CD8-positive, alpha-beta T cell (primary cell): ENCODE measurements at regions of chr13 and their contacts with region 1.

Region 1: DNA sequence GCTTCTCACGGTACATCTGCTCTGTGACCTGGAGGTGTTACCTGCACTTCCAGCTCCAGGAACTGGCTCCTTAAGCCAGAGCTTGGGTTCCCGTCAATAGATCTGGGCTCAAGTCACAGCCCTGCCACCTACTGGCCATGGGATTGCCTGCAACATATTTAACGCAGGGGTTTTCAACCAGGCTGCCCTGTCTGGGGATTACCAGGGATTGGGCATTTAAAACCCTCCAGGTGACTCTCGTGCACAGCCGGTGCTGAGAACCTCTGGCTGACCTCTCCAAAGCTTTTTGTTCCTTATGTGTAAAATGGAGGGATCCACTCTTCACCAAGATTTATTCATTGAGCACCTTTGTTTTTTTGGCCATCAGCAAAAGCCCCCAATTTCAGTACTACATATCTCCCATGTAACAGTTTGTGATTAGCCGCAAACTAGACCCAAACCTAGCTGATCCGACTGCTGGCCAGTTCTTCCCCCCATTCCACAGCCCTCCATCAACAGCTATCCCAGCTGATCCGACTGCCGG is 76.6 kb upstream of the STK24 start:
- DNase-seq: peak; percentile 52 to 80 (median 72)
- ATAC-seq: peak; percentile 97
- H3K4me3 ChIP-seq: no peak overlapping the region
- H3K4me3 Mint-ChIP-seq: peak overlapping the region; percentile 78
- H3K27ac ChIP-seq: no peak overlapping the region
- H3K27ac Mint-ChIP-seq: no peak overlapping the region
- H3K4me1 ChIP-seq: peaks cover 3% of the 10 kb centered on the region
- H3K4me1 Mint-ChIP-seq: peaks cover 2% of the 10 kb centered on the region
- H3K27me3 ChIP-seq: no peaks in the 10 kb centered on the region
- H3K27me3 Mint-ChIP-seq: peaks cover 5% of the 10 kb centered on the region
- CTCF ChIP-seq: peak; percentile 78

Region 2: DNA sequence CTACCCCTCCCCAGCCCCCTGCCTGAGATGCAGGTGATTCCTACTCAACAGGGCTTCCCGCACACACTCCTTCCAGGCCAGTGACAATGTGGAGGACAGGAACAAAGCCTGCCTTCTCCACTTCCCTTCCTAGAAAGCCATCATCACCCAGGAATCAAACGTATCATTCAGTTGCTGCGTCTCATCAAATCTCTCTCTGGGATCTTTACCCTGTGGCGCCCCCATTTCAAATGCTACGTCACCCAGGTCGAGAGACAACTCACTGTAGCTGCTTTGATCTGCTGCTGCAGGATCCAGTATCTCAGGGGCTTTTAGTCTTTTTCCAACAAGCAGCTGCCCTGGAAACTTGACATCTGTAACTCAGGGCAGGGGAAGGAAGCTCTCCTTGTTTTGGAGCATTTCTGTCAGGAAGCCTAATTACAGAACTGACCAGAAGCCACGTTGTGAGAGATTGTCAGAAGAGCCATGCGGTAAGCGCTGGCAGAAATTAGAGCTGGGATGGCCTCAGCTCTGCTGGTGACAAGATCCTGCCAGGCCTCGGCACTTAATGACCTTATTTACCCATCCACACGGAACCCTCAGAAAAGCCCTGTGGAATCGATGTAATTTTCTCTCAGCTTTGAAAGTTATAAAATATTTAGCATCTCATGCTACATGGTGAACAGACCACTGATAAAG is 217.2 kb before region 1 on chr13:
- CTCF ChIA-PET with region 1: interaction called, 242 read pairs
- POLR2A ChIA-PET with region 1: no interaction called
- intact Hi-C with region 1: no loop called
- DNase-seq: no peak
- ATAC-seq: no peak
- H3K4me3 ChIP-seq: no peak overlapping the region
- H3K4me3 Mint-ChIP-seq: no peak overlapping the region
- H3K27ac ChIP-seq: no peak overlapping the region
- H3K27ac Mint-ChIP-seq: no peak overlapping the region
- H3K4me1 ChIP-seq: no peaks in the 10 kb centered on the region
- H3K4me1 Mint-ChIP-seq: no peaks in the 10 kb centered on the region
- H3K27me3 ChIP-seq: no peaks in the 10 kb centered on the region
- H3K27me3 Mint-ChIP-seq: peaks cover 10% of the 10 kb centered on the region
- CTCF ChIP-seq: no peak

Region 3: DNA sequence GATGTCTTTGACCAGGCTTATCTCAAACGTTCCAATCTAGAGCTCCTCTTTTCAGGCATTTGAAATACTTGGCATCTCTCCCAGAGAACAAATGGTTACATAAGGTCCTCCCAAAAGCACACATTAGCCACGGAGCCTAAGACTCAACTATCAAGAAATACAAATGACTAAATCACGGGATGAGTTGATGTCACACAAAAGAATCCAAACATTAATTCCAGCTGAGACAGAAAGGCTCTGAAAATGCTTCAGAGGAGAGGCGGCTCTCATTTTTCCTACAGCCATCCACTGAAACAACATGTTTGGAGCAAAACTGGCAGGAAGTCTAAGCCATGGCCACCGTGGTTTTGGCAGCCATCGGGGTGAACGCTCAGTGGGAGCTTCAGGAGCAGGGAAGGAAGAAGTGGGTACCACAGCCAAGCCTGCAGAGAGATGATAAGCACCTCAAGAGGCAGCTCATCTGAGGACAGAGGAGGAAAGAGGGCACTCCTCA is 199.1 kb before region 1 on chr13:
- CTCF ChIA-PET with region 1: interaction called, 27 read pairs
- POLR2A ChIA-PET with region 1: no interaction called
- intact Hi-C with region 1: no loop called
- DNase-seq: no peak
- ATAC-seq: no peak
- H3K4me3 ChIP-seq: no peak overlapping the region
- H3K4me3 Mint-ChIP-seq: no peak overlapping the region
- H3K27ac ChIP-seq: no peak overlapping the region
- H3K27ac Mint-ChIP-seq: peak overlapping the region; percentile 19
- H3K4me1 ChIP-seq: peaks cover 15% of the 10 kb centered on the region
- H3K4me1 Mint-ChIP-seq: peaks cover 20% of the 10 kb centered on the region
- H3K27me3 ChIP-seq: no peaks in the 10 kb centered on the region
- H3K27me3 Mint-ChIP-seq: no peaks in the 10 kb centered on the region
- CTCF ChIP-seq: no peak

Region 4: GRCh38 chr13:98476538-98476966 is 177.0 kb before region 1 on chr13:
- CTCF ChIA-PET with region 1: interaction called, 27 read pairs
- POLR2A ChIA-PET with region 1: no interaction called
- intact Hi-C with region 1: no loop called
- DNase-seq: peak; percentile 57 to 95 (median 87)
- ATAC-seq: peak; percentile 90
- H3K4me3 ChIP-seq: peak overlapping the region in 1 of 2 experiments; percentile 20
- H3K4me3 Mint-ChIP-seq: peak overlapping the region; percentile 67
- H3K27ac ChIP-seq: peak overlapping the region; percentile 44 to 58
- H3K27ac Mint-ChIP-seq: peak overlapping the region; percentile 94
- H3K4me1 ChIP-seq: peaks cover 44% of the 10 kb centered on the region
- H3K4me1 Mint-ChIP-seq: peaks cover 66% of the 10 kb centered on the region
- H3K27me3 ChIP-seq: no peaks in the 10 kb centered on the region
- H3K27me3 Mint-ChIP-seq: no peaks in the 10 kb centered on the region
- CTCF ChIP-seq: no peak

Region 5: DNA sequence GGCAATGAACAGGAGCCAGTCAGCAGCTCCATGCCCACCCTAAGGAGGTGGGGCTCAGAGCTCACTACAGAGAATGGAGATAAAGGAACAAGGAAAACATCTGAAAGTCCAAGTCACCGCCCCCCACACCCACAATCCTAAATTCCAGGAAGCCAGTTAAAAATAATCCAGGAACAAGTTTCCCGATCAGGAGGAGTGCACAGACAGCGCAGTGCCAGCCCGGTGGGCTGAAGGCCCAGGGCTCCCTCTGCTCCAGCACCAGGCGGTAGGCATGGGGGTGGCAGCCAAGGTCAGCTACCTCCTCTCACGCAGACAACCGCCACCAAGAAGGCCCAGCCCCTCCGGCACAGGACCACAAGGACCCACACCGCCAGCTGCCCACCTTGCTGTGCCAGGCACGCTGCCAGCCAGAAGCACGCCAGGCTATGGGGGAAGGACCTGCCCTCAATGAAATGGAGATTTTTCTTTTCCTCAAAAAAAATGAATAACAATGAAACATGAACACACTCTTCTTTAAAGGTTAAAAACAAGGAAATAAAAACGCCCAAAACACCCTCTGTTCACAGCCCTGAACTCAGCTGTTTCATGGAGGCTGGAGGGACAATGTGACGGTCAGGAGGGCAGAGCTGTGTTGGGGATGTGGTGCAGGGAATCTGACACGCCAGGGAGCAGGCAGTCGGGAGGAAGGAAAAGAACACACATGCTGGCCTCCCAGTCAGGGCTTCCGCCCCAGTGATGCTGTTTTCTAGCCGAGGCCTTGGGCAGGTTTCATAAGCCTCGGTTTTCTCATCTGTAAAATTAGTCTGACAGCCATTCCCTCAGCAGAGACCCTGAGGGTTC is 87.6 kb before region 1 on chr13:
- CTCF ChIA-PET with region 1: interaction called, 4 read pairs
- POLR2A ChIA-PET with region 1: no interaction called
- intact Hi-C with region 1: loop called in 1 of 2 experiments (anchors 10 kb)
- DNase-seq: no peak
- ATAC-seq: no peak
- H3K4me3 ChIP-seq: no peak overlapping the region
- H3K4me3 Mint-ChIP-seq: peak overlapping the region; percentile 73
- H3K27ac ChIP-seq: peak overlapping the region in 1 of 2 experiments; percentile 39
- H3K27ac Mint-ChIP-seq: peak overlapping the region; percentile 97
- H3K4me1 ChIP-seq: peaks cover 79% of the 10 kb centered on the region
- H3K4me1 Mint-ChIP-seq: peaks cover 87% of the 10 kb centered on the region
- H3K27me3 ChIP-seq: no peaks in the 10 kb centered on the region
- H3K27me3 Mint-ChIP-seq: no peaks in the 10 kb centered on the region
- CTCF ChIP-seq: no peak

Region 6: GRCh38 chr13:98672944-98673545 is 19.5 kb after region 1 on chr13:
- CTCF ChIA-PET with region 1: interaction called, 12 read pairs
- POLR2A ChIA-PET with region 1: no interaction called
- intact Hi-C with region 1: loop called in 1 of 2 experiments (anchors 2 kb)
- DNase-seq: peak in 8 of 9 experiments; percentile 19 to 66 (median 44)
- ATAC-seq: peak; percentile 44
- H3K4me3 ChIP-seq: no peak overlapping the region
- H3K4me3 Mint-ChIP-seq: no peak overlapping the region
- H3K27ac ChIP-seq: no peak overlapping the region
- H3K27ac Mint-ChIP-seq: no peak overlapping the region
- H3K4me1 ChIP-seq: peaks cover 3% of the 10 kb centered on the region
- H3K4me1 Mint-ChIP-seq: no peaks in the 10 kb centered on the region
- H3K27me3 ChIP-seq: no peaks in the 10 kb centered on the region
- H3K27me3 Mint-ChIP-seq: no peaks in the 10 kb centered on the region
- CTCF ChIP-seq: peak; percentile 81